ENCODE measurements at regions of chr3 and their contacts with region 1.

Region 1: DNA sequence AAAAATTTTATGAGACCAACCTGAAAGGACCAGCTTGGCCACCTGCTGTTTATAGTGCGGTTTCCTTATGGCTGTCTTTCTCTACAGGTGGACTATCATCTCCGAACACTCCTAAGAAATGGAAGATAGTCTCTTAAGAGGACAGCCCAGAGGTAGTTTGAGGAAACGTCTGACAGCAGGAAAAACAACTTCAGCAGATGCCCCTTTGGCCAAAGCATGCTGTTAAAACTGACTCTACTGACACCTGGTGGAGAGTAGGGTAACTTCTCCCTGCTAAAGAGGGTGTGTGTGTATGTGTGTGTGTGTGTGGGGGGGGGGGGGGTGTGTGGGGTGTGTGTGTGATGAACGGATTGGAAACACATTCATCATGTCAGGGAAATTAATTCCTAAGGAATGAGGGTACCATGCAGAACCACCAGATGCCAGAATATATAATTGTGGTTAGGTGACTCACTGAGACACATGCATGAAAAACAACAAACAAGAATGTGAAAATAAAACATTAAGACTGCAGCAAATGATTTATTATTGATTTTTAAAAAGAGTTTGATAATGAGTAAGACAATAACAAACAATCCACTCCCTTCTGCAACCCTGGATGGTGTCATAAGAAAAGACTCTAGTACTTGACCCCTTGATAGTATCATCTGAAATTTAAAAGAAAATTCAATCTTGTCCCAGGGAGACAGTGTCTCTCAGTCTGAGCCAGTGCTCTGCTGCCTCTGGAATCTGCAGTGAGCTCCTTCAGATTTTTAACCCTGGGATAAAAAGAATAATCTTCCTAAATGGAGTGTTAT is 256.5 kb downstream of the THRB start:
- ATAC-seq: peak; percentile 76 to 90 (median 78)
- H3K4me3 ChIP-seq: no peak overlapping the region
- H3K27ac ChIP-seq: no peak overlapping the region
- H3K4me1 ChIP-seq: peaks cover 10% of the 10 kb centered on the region in 2 donors

Region 2: GRCh38 chr3:22257252-22257651 is 1980.9 kb before region 1 on chr3:
- in situ Hi-C with region 1: no loop called
- ATAC-seq: peak in 3 of 8 experiments; percentile 36 to 47 (median 36)
- H3K4me3 ChIP-seq: no peak overlapping the region
- H3K27ac ChIP-seq: peak overlapping the region in 1 of 2 donors; percentile 38
- H3K4me1 ChIP-seq: peaks cover 0 to 16% of the 10 kb centered on the region in 2 donors

Region 3: DNA sequence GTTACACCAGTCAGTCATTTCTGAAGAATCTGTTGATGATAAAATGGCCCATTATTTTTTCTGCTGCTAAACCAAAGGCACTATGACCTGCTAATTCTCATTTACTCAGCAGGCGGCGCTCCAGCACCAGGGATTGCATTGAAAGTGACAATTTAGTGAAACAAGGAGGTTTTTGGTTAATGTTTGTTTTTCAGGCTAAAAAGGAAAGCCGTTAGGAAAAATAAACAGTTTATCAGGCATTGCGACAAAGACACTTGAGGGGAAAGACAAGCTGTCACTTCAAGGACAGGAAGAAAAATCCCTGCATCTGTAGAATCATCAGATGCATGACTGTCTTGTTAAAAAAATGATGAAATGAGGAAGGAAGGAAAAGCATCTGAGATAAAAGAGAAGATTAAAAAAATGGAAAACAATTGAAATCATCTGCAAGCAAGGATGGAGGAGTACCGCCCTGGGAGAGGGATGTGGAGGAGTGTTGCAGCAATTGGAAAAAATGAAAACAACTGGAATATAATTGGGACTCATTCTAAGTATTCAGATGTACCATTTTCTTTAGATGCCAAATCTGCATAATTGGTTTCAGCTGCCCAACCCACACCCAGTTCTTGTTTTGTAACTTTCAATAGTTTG is 239.0 kb before region 1 on chr3:
- in situ Hi-C with region 1: loop called in 3 of 9 experiments (anchors 10 to 25 kb)
- ATAC-seq: peak in 3 of 8 experiments; percentile 59 to 73 (median 67)
- H3K4me3 ChIP-seq: no peak overlapping the region
- H3K27ac ChIP-seq: no peak overlapping the region
- H3K4me1 ChIP-seq: peaks cover 0 to 14% of the 10 kb centered on the region in 2 donors